CD4-positive, alpha-beta T cell (primary cell): ENCODE measurements at regions of chr1 and their contacts with region 1.

Region 1: GRCh38 chr1:43934101-43934985 is 742 bp downstream of the ARTN start:
- DNase-seq: peak in 13 of 14 experiments; percentile 18 to 69 (median 40)
- ATAC-seq: peak; percentile 65
- H3K4me3 ChIP-seq: no peak overlapping the region
- H3K4me3 Mint-ChIP-seq: peak overlapping the region; percentile 48
- H3K27ac ChIP-seq: no peak overlapping the region
- H3K27ac Mint-ChIP-seq: no peak overlapping the region
- H3K4me1 ChIP-seq: peaks cover 33% of the 10 kb centered on the region
- H3K4me1 Mint-ChIP-seq: peaks cover 15% of the 10 kb centered on the region
- H3K27me3 ChIP-seq: peaks cover 35 to 41% of the 10 kb centered on the region in 2 experiments
- H3K27me3 Mint-ChIP-seq: peaks cover 36% of the 10 kb centered on the region
- CTCF ChIP-seq: peak; percentile 68

Region 2: DNA sequence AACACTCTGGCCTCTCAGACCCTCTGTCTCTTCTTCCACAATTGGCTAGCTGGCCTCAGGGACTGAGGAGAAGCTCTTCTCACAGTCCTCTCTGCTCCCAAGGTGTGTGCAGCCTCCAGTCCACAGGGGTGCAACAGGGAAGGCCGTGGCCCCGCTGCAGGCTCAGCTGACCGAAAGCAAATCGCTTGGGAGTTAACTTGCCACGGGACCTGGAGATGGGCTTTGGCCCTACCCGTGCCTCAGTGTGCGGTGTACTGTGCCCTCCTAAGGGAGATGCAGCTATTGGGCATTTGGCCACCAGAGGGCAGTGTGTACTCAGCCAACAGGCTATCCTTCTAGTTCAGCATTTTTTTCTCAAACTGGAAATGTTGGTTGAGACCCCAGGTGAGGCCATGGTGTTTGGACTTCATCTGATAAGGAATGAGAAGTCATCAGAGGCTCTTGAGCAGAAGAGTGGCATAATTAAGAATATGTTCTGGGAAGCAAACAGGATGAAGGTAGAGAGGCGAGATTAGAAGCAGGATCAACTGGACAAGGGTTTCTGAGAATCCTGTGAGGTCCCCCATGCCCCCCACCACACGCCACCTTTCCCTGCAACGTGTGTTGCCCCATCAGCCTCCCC is 707.1 kb before region 1 on chr1:
- CTCF ChIA-PET with region 1: interaction called, 3 read pairs
- POLR2A ChIA-PET with region 1: no interaction called
- intact Hi-C with region 1: loop called in 1 of 2 experiments (anchors 10 kb)
- DNase-seq: peak; percentile 73 to 91 (median 84)
- ATAC-seq: peak; percentile 89
- H3K4me3 ChIP-seq: no peak overlapping the region
- H3K4me3 Mint-ChIP-seq: no peak overlapping the region
- H3K27ac ChIP-seq: no peak overlapping the region
- H3K27ac Mint-ChIP-seq: no peak overlapping the region
- H3K4me1 ChIP-seq: peaks cover 3% of the 10 kb centered on the region
- H3K4me1 Mint-ChIP-seq: no peaks in the 10 kb centered on the region
- H3K27me3 ChIP-seq: no peaks in the 10 kb centered on the region
- H3K27me3 Mint-ChIP-seq: no peaks in the 10 kb centered on the region
- CTCF ChIP-seq: peak; percentile 89

Region 3: GRCh38 chr1:43688594-43689000 is 245.7 kb before region 1 on chr1:
- CTCF ChIA-PET with region 1: no interaction called
- POLR2A ChIA-PET with region 1: no interaction called
- intact Hi-C with region 1: no loop called
- DNase-seq: no peak
- ATAC-seq: no peak
- H3K4me3 ChIP-seq: no peak overlapping the region
- H3K4me3 Mint-ChIP-seq: no peak overlapping the region
- H3K27ac ChIP-seq: no peak overlapping the region
- H3K27ac Mint-ChIP-seq: no peak overlapping the region
- H3K4me1 ChIP-seq: no peaks in the 10 kb centered on the region
- H3K4me1 Mint-ChIP-seq: no peaks in the 10 kb centered on the region
- H3K27me3 ChIP-seq: no peaks in the 10 kb centered on the region
- H3K27me3 Mint-ChIP-seq: no peaks in the 10 kb centered on the region
- CTCF ChIP-seq: no peak

Region 4: GRCh38 chr1:43763497-43763973 is 170.8 kb before region 1 on chr1:
- CTCF ChIA-PET with region 1: interaction called, 20 read pairs
- POLR2A ChIA-PET with region 1: no interaction called
- intact Hi-C with region 1: loop called (anchors 1 kb)
- DNase-seq: peak in 13 of 14 experiments; percentile 1 to 70 (median 17)
- ATAC-seq: peak; percentile 78
- H3K4me3 ChIP-seq: no peak overlapping the region
- H3K4me3 Mint-ChIP-seq: no peak overlapping the region
- H3K27ac ChIP-seq: no peak overlapping the region
- H3K27ac Mint-ChIP-seq: no peak overlapping the region
- H3K4me1 ChIP-seq: no peaks in the 10 kb centered on the region
- H3K4me1 Mint-ChIP-seq: peaks cover 6% of the 10 kb centered on the region
- H3K27me3 ChIP-seq: no peaks in the 10 kb centered on the region
- H3K27me3 Mint-ChIP-seq: no peaks in the 10 kb centered on the region
- CTCF ChIP-seq: peak; percentile 75

Region 5: GRCh38 chr1:44049839-44050238 is 115.5 kb after region 1 on chr1:
- CTCF ChIA-PET with region 1: no interaction called
- POLR2A ChIA-PET with region 1: no interaction called
- intact Hi-C with region 1: loop called in 1 of 2 experiments (anchors 5 kb)
- DNase-seq: no peak
- ATAC-seq: no peak
- H3K4me3 ChIP-seq: no peak overlapping the region
- H3K4me3 Mint-ChIP-seq: no peak overlapping the region
- H3K27ac ChIP-seq: no peak overlapping the region
- H3K27ac Mint-ChIP-seq: no peak overlapping the region
- H3K4me1 ChIP-seq: no peaks in the 10 kb centered on the region
- H3K4me1 Mint-ChIP-seq: no peaks in the 10 kb centered on the region
- H3K27me3 ChIP-seq: peaks cover 0 to 4% of the 10 kb centered on the region in 2 experiments
- H3K27me3 Mint-ChIP-seq: peaks cover 7% of the 10 kb centered on the region
- CTCF ChIP-seq: no peak